ENCODE measurements at regions of chr2 and their contacts with region 1.

Region 1: DNA sequence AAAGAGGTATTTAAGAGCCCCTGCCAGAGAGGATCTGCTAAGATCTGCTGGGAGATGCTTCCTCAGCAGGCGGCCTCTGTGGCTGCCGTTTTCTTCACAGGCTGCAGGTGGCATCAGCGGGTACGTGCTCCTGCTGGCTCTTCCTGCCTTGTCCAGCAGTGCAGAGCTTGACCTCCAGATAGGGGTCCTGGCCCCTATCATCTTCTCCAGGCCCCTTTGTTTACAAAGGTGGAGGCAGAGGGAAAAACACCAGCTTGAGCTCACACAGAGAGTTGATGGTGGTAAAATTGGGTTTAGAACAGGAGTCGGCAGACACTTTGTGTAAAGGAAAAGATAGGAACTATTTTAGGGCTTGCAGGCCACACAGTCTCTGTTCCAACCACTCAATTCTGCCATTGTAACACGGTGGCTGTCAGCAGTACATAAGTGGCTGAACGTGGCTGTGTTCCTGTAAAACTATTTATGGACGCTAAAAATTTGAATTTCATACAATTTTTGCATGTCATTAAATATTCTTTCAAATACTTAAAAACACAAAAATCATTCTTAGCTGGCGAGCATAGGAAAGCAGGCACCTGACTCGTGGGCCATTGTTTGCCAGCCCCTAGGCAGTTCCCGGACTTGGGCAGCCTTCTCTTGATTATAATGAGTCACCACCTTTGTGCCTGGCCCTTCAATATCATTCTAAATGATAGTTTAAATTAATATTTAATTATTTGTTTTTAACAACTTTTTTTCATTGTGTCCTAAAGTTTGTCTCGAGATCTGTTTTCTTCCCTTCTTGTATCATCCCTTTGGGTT is 98.2 kb upstream of the B3GNT7 start:
- DNase-seq: peak; percentile 68
- H3K4me3 Mint-ChIP-seq: no peak overlapping the region
- H3K27ac Mint-ChIP-seq: no peak overlapping the region
- H3K4me1 Mint-ChIP-seq: peaks cover 3% of the 10 kb centered on the region
- H3K27me3 Mint-ChIP-seq: peaks cover 6% of the 10 kb centered on the region

Region 2: DNA sequence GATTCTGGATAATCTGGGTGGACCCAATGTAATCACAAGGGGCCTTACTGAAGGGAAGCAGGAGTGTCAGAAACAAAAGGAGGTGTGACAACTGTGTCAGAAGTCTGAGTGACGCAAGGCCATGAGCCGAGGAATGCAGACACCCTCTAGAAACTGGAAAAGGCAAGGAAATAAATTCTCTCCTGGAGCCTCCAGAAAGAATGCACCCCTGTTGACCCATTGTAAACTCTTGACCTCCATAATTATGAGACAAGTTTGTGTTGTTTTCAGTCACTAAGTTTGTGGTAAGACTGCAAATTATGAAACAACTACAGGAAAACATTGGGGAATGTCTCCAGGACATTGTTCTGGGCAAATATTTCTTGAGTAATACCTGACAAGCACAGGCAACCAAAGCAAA is 50.9 kb after region 1 on chr2:
- intact Hi-C with region 1: no loop called
- DNase-seq: no peak
- H3K4me3 Mint-ChIP-seq: no peak overlapping the region
- H3K27ac Mint-ChIP-seq: no peak overlapping the region
- H3K4me1 Mint-ChIP-seq: no peaks in the 10 kb centered on the region
- H3K27me3 Mint-ChIP-seq: peaks cover 26% of the 10 kb centered on the region

Region 3: DNA sequence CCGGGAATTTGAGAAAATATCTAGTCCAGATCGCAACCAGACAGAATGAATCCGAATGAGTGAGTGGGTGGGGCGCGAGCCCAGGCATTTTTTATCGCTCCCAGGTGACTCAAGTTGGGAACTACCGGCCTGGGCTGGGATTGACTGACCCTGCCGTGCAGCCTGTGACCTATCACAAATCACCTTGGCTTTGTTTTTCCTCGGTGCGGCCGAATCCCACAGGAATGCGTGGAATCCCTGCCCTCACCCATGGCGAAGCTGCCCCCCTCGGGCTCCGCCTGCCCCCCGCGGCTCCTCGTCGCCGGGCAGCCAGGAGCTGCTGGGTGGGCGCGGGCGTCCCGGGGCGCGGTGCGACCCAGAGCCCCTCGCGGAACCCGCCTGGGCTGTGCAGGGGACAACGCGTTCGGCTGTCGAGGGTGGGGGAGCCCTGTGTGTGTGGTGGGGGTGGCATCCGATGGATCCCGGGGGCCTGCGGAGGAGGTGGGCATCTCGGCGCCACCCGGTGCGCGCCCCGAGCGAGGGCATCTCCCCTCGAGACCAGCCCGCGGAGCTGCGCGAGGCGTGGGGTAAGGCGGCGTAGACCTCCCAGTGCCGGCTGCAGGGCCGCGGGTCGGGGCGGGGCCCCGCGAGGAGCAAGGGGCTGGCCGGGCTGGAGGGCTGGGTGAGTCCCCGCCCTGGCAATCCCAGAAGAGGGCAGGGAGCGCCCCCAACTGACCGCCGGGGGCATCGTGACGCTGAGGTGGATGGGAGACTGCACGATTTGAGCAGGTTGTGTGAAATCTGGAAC is 114.7 kb after region 1 on chr2:
- intact Hi-C with region 1: loop called (anchors 5 kb)
- DNase-seq: peak; percentile 86
- H3K4me3 Mint-ChIP-seq: peak overlapping the region; percentile 26
- H3K27ac Mint-ChIP-seq: no peak overlapping the region
- H3K4me1 Mint-ChIP-seq: peaks cover 2% of the 10 kb centered on the region
- H3K27me3 Mint-ChIP-seq: peaks cover 44% of the 10 kb centered on the region